Dendritic cell treated with granulocyte-macrophage colony-stimulating factor and Interleukin-4, amounts not matched to agents 40 ng/mL and 50 ng/mL, for 4 days (primary cell): ENCODE measurements at regions of chr1 and their contacts with region 1.

Region 1: DNA sequence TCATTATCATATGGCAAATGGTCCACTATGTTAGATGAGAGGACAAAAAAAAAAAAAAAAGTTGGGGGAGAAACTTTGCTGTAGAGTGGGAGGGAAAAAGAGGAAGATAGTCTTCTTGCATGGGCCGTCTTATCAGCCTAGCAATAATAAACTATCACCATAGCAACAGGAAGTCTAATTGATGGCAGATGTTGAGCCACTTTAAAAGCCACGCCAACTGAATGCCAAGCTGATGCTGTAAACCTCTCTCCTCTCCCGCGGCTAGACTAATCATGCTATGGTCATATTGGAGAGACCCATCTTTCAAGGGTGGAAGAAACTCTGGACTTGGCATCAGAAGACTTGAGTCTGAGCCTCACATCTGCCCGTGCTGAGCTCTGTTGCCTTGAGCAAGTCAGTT is 122.2 kb upstream of the HOOK1 start:
- H3K4me3 Mint-ChIP-seq: no peak overlapping the region
- H3K27ac Mint-ChIP-seq: no peak overlapping the region
- H3K4me1 Mint-ChIP-seq: peaks cover 48% of the 10 kb centered on the region
- H3K27me3 Mint-ChIP-seq: no peaks in the 10 kb centered on the region

Region 2: GRCh38 chr1:59674595-59674994 is 18.0 kb before region 1 on chr1:
- intact Hi-C with region 1: loop called (anchors 2 kb)
- H3K4me3 Mint-ChIP-seq: peak overlapping the region; percentile 4
- H3K27ac Mint-ChIP-seq: peak overlapping the region; percentile 71
- H3K4me1 Mint-ChIP-seq: peaks cover 81% of the 10 kb centered on the region
- H3K27me3 Mint-ChIP-seq: peaks cover 2% of the 10 kb centered on the region

Region 3: GRCh38 chr1:59776960-59777852 is 84.6 kb after region 1 on chr1:
- intact Hi-C with region 1: no loop called
- H3K4me3 Mint-ChIP-seq: no peak overlapping the region
- H3K27ac Mint-ChIP-seq: peak overlapping the region; percentile 72
- H3K4me1 Mint-ChIP-seq: peaks cover 33% of the 10 kb centered on the region
- H3K27me3 Mint-ChIP-seq: no peaks in the 10 kb centered on the region

Region 4: GRCh38 chr1:59947047-59947938 is 254.7 kb after region 1 on chr1:
- intact Hi-C with region 1: no loop called
- H3K4me3 Mint-ChIP-seq: no peak overlapping the region
- H3K27ac Mint-ChIP-seq: no peak overlapping the region
- H3K4me1 Mint-ChIP-seq: no peaks in the 10 kb centered on the region
- H3K27me3 Mint-ChIP-seq: no peaks in the 10 kb centered on the region